Calu3 (cell line): ENCODE measurements at regions of chr12 and their contacts with region 1.

Region 1: GRCh38 chr12:57583008-57583831 is 7.8 kb upstream of the PIP4K2C start:
- DNase-seq: peak; percentile 80
- H3K4me3 Mint-ChIP-seq: no peak overlapping the region
- H3K27ac Mint-ChIP-seq: peak overlapping the region; percentile 18
- H3K4me1 Mint-ChIP-seq: peaks cover 15% of the 10 kb centered on the region
- H3K27me3 Mint-ChIP-seq: peaks cover 13% of the 10 kb centered on the region
- CTCF ChIP-seq: peak; percentile 91

Region 2: GRCh38 chr12:57459055-57459749 is 124.0 kb before region 1 on chr12:
- CTCF ChIA-PET with region 1: interaction called, 11 read pairs
- intact Hi-C with region 1: no loop called
- DNase-seq: peak; percentile 96
- H3K4me3 Mint-ChIP-seq: peak overlapping the region; percentile 74
- H3K27ac Mint-ChIP-seq: peak overlapping the region; percentile 96
- H3K4me1 Mint-ChIP-seq: peaks cover 56% of the 10 kb centered on the region
- H3K27me3 Mint-ChIP-seq: peaks cover 46% of the 10 kb centered on the region
- CTCF ChIP-seq: peak; percentile 95

Region 3: DNA sequence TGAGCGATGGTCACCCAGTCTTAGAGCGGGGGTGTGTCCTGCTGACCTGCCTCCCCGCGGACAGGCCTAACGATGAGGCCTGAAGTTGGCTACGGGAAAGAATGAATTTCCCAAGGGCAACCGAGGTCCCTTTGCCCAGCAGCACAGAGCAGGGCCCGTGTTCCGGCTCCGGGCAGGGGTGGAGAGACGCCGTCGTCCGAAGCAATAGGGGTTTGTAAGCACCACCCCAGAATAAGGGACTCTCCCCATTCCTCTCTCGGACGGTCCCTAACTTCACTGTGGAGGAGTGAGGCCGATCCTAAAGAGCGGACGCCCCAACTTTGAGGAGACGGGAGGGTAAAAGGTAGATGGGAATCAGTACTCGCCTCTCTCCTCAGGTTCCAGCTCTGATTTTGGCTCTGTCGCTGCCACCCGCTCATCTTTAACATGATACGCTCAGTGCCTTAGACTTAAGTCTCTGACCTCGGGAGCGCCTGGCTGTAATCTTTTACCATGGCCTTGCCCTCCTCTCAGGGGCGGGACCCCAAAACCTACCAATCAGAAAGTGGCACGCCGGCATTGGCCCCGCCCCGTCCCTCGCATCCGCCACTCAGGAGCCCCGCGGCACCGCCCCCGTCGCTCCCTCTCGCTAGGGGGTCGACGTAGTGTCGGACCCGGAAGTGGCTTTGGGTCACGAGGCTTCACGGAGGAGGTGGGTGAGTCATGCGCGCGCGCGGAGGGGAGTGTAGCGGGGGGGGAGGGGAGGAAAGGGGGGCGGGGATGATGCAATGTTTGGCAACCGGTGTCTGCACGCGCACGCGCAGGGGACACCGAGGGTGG is 63.0 kb before region 1 on chr12 and contains the start of gene DDIT3:
- CTCF ChIA-PET with region 1: no interaction called
- intact Hi-C with region 1: no loop called
- DNase-seq: peak; percentile 100
- H3K4me3 Mint-ChIP-seq: peak within 1 kb of the TSS; percentile 95
- H3K27ac Mint-ChIP-seq: peak within 1 kb of the TSS; percentile 100
- H3K4me1 Mint-ChIP-seq: peaks cover 51% of the 10 kb centered on the region
- H3K27me3 Mint-ChIP-seq: no peaks in the 10 kb centered on the region
- CTCF ChIP-seq: no peak
- total RNA-seq, gene DDIT3: 70.2 and 80.5 TPM in 2 replicates

Region 4: DNA sequence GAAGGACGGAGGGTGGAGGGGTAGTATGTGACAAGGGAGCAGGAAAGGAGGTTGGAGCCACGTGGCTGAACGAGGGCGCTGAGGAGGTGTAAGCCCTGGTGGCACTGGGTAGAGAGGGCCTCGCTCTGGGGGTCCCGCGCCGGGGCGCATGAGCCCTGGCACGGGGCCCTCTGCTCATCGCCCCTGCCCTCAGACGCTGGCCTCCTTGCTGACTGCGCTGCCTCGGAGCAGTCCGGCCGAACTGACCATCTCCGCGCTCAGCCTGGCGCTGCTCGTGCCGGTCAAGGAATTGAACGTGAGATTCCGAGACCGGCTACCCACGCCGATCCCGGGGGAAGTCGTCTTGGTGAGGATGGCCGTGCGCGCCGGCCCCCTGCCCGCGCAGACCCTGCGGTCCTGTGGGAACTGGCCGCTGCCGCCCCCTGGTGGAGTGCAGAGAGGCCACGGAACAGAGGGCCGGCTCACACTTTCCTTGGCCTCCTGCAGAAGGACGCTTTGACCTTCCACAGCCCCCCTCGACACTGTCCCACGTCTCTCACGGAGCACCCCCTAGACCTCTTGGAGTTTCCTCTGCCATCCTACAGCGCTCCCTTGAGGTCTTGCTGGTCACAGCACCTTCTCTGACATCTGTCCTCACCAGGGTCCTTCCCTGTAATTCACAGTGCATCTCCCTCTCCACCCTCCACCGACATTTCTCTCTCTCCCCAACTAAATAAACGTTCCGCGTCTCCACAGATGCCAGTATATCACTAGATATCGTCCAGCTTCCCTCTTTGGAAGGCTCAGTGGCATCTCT is 38.5 kb after region 1 on chr12:
- CTCF ChIA-PET with region 1: interaction called, 16 read pairs
- intact Hi-C with region 1: loop called (anchors 1 kb)
- DNase-seq: peak; percentile 76
- H3K4me3 Mint-ChIP-seq: peak overlapping the region; percentile 67
- H3K27ac Mint-ChIP-seq: no peak overlapping the region
- H3K4me1 Mint-ChIP-seq: peaks cover 15% of the 10 kb centered on the region
- H3K27me3 Mint-ChIP-seq: peaks cover 100% of the 10 kb centered on the region
- CTCF ChIP-seq: peak; percentile 96

Region 5: GRCh38 chr12:57693659-57694458 is 110.6 kb after region 1 on chr12 and contains the start of gene OS9:
- CTCF ChIA-PET with region 1: interaction called, 6 read pairs
- intact Hi-C with region 1: loop called (anchors 5 kb)
- DNase-seq: peak; percentile 95
- H3K4me3 Mint-ChIP-seq: no peak within 1 kb of the TSS
- H3K27ac Mint-ChIP-seq: no peak within 1 kb of the TSS
- H3K4me1 Mint-ChIP-seq: no peaks in the 10 kb centered on the region
- H3K27me3 Mint-ChIP-seq: peaks cover 28% of the 10 kb centered on the region
- CTCF ChIP-seq: peak; percentile 62
- total RNA-seq, gene OS9: 221 and 258 TPM in 2 replicates

Region 6: GRCh38 chr12:57904848-57905811 is 321.9 kb after region 1 on chr12:
- CTCF ChIA-PET with region 1: no interaction called
- intact Hi-C with region 1: loop called (anchors 2 kb)
- DNase-seq: peak; percentile 93
- H3K4me3 Mint-ChIP-seq: no peak overlapping the region
- H3K27ac Mint-ChIP-seq: peak overlapping the region; percentile 55
- H3K4me1 Mint-ChIP-seq: peaks cover 7% of the 10 kb centered on the region
- H3K27me3 Mint-ChIP-seq: peaks cover 50% of the 10 kb centered on the region
- CTCF ChIP-seq: peak; percentile 100